A673 (cell line): ENCODE measurements at regions of chr11 and their contacts with region 1.

Region 1: GRCh38 chr11:124961972-124962609 is 8.1 kb downstream of the CCDC15 start:
- DNase-seq: peak; percentile 84
- H3K4me3 ChIP-seq: no peak overlapping the region
- H3K27ac ChIP-seq: no peak overlapping the region
- H3K4me1 ChIP-seq: no peaks in the 10 kb centered on the region
- H3K27me3 ChIP-seq: no peaks in the 10 kb centered on the region
- CTCF ChIP-seq: peak; percentile 82

Region 2: GRCh38 chr11:124865921-124866583 is 96.0 kb before region 1 on chr11:
- CTCF ChIA-PET with region 1: no interaction called
- POLR2A ChIA-PET with region 1: no interaction called
- intact Hi-C with region 1: no loop called
- DNase-seq: peak; percentile 60
- H3K4me3 ChIP-seq: peak overlapping the region; percentile 30
- H3K27ac ChIP-seq: no peak overlapping the region
- H3K4me1 ChIP-seq: peaks cover 8% of the 10 kb centered on the region
- H3K27me3 ChIP-seq: peaks cover 92% of the 10 kb centered on the region
- CTCF ChIP-seq: peak; percentile 92

Region 3: GRCh38 chr11:124891373-124891861 is 70.7 kb before region 1 on chr11:
- CTCF ChIA-PET with region 1: no interaction called
- POLR2A ChIA-PET with region 1: no interaction called
- intact Hi-C with region 1: no loop called
- DNase-seq: no peak
- H3K4me3 ChIP-seq: no peak overlapping the region
- H3K27ac ChIP-seq: no peak overlapping the region
- H3K4me1 ChIP-seq: no peaks in the 10 kb centered on the region
- H3K27me3 ChIP-seq: peaks cover 23% of the 10 kb centered on the region
- CTCF ChIP-seq: no peak

Region 4: GRCh38 chr11:124946735-124947141 is 15.4 kb before region 1 on chr11:
- CTCF ChIA-PET with region 1: no interaction called
- POLR2A ChIA-PET with region 1: no interaction called
- intact Hi-C with region 1: no loop called
- DNase-seq: no peak
- H3K4me3 ChIP-seq: no peak overlapping the region
- H3K27ac ChIP-seq: no peak overlapping the region
- H3K4me1 ChIP-seq: no peaks in the 10 kb centered on the region
- H3K27me3 ChIP-seq: no peaks in the 10 kb centered on the region
- CTCF ChIP-seq: no peak

Region 5: DNA sequence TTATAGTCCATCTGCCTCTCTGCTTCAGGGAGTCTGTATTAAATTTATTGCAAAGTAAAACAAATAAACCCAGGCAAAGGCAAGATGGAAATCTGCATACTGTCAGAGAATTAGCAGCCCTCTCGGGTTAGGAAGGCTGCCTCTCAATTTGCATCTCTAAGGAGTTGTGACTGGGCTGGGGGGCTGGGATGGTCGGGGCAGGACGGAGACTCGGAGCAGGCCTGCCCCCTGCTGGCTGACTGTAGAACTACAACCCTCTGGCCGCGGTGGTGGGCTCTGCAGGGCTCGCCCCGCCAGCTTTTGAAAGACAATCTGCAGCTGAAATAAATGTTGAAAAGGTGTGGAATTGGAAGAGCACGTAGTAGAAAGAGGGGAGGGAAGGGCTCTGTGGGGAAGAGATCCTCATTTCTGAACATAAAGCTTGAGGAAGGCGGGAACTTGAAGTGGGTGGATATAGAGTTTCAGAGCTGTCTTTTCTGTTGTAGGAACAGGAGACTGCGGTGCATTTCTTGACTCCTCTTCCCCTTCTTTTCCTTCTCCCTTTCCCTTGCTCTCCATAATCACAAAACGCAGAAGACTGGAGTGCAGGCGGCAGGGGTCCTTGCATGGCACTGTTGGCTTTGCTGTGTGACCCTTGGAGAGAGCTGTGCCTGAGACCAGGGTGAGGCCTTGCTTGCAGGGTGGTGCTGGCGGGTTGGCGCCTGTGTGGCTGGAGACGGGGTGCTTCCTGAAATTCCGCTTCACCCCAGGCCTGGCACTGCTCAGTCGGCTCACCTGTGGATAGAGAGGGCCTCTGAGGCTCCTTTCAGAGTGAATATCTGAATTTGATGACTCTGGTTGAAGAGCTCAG is 179.8 kb after region 1 on chr11:
- CTCF ChIA-PET with region 1: no interaction called
- POLR2A ChIA-PET with region 1: no interaction called
- intact Hi-C with region 1: loop called (anchors 1 kb)
- DNase-seq: peak; percentile 77
- H3K4me3 ChIP-seq: no peak overlapping the region
- H3K27ac ChIP-seq: no peak overlapping the region
- H3K4me1 ChIP-seq: peaks cover 7% of the 10 kb centered on the region
- H3K27me3 ChIP-seq: no peaks in the 10 kb centered on the region
- CTCF ChIP-seq: peak; percentile 99

Region 6: DNA sequence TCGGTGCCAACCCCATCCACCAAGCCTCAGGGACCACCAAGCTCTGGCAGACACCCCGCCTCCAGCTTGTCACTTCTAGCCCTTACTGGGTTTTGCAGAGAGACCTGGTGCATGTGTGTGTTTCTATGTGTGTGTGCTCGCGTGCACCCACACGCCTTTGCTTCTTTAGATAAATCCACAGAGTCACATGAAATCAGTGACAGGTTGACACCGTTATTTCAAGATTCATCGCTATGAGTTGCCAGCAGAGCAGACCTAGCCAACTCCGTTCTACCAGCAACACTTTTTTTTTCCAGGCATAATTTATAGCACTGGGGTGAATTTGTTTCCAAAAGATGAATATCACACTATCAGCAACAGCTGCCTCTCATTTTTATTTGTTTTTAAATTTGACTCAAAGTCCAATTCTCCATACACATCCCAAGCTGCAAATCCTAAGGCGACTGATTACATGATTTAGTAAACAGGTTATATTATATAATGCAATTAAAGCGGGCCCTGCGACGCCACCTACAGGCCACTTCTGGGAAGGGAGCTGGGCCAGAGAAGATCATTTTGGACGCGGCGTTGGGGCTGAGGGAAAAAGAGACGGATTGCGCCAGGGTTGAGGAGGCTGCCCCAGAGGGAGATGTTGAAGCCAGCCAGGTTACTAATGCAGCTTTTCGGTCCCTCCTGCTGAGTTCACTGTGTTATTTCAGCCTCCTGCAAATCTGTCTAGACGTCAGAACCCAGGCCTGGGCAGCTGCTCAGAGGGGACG is 383.5 kb after region 1 on chr11:
- CTCF ChIA-PET with region 1: no interaction called
- POLR2A ChIA-PET with region 1: no interaction called
- intact Hi-C with region 1: loop called (anchors 2 kb)
- DNase-seq: peak; percentile 68
- H3K4me3 ChIP-seq: no peak overlapping the region
- H3K27ac ChIP-seq: no peak overlapping the region
- H3K4me1 ChIP-seq: no peaks in the 10 kb centered on the region
- H3K27me3 ChIP-seq: no peaks in the 10 kb centered on the region
- CTCF ChIP-seq: peak; percentile 98

Region 7: GRCh38 chr11:125429166-125429707 is 467.1 kb after region 1 on chr11:
- CTCF ChIA-PET with region 1: no interaction called
- POLR2A ChIA-PET with region 1: no interaction called
- intact Hi-C with region 1: loop called (anchors 5 kb)
- DNase-seq: peak; percentile 69
- H3K4me3 ChIP-seq: no peak overlapping the region
- H3K27ac ChIP-seq: no peak overlapping the region
- H3K4me1 ChIP-seq: no peaks in the 10 kb centered on the region
- H3K27me3 ChIP-seq: no peaks in the 10 kb centered on the region
- CTCF ChIP-seq: peak; percentile 92